Heart left ventricle (tissue), 16 donors: ENCODE measurements at regions of chr5 and their contacts with region 1.

Region 1: GRCh38 chr5:95961617-95962474 is at the start of gene ELL2:
- DNase-seq: peak; percentile 97 to 99 (median 98)
- ATAC-seq: peak; percentile 89 to 95 (median 94)
- H3K4me3 ChIP-seq: peak within 1 kb of the TSS; percentile 70 to 97 (median 90)
- H3K27ac ChIP-seq: peak within 1 kb of the TSS; percentile 94 to 100 (median 98)
- H3K4me1 ChIP-seq: peaks cover 0 to 49% (median 23%) of the 10 kb centered on the region in 12 donors
- H3K27me3 ChIP-seq: no peaks in the 10 kb centered on the region
- CTCF ChIP-seq: no peak
- POLR2A ChIP-seq: peak; percentile 48 to 97
- total RNA-seq, gene ELL2: 15.4 to 74.5 (median 31.1) TPM

Region 2: DNA sequence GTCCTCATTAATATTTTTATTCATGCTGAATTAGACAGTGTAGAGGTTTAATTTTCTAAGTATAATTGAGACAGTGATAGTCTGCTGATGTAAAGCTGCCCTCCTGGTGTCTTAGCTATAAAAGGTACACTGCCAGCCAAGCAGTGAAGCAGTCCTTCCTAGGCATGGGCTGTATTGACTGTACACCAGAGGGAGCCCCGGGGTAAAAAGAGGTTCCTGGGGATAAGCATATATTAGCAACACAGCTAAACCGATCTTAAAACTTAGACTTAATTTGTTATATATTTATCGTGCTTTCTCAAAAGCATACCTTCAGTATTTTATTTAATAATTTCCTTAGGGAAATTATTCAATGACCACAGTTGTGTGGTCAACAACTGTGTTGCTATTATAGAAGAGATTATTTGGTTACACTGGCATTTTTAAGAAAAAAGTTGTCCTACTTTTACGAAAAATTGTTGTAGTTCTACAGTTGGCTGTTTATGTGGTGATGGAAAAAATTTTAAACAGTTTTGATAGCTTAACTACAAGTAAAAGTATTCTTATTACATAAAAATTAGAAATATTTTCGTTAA is 69.0 kb before region 1 on chr5:
- intact Hi-C with region 1: loop called in 2 of 10 experiments (anchors 5 kb)
- DNase-seq: no peak
- ATAC-seq: peak in 2 of 4 donors; percentile 42 to 59
- H3K4me3 ChIP-seq: no peak overlapping the region
- H3K27ac ChIP-seq: no peak overlapping the region
- H3K4me1 ChIP-seq: peaks cover 0 to 22% (median 3%) of the 10 kb centered on the region in 12 donors
- H3K27me3 ChIP-seq: no peaks in the 10 kb centered on the region
- CTCF ChIP-seq: peak in 11 of 12 donors; percentile 18 to 52 (median 35)
- POLR2A ChIP-seq: no peak

Region 3: GRCh38 chr5:96235008-96235910 is 273.4 kb after region 1 on chr5:
- intact Hi-C with region 1: loop called in 2 of 10 experiments (anchors 10 kb)
- DNase-seq: peak in 1 of 5 donors; percentile 23
- ATAC-seq: peak; percentile 93 to 98 (median 96)
- H3K4me3 ChIP-seq: peak overlapping the region in 1 of 12 donors; percentile 8
- H3K27ac ChIP-seq: peak overlapping the region; percentile 70 to 95 (median 80)
- H3K4me1 ChIP-seq: peaks cover 0 to 21% (median 13%) of the 10 kb centered on the region in 12 donors
- H3K27me3 ChIP-seq: no peaks in the 10 kb centered on the region
- CTCF ChIP-seq: no peak
- POLR2A ChIP-seq: peak in 1 of 2 donors; percentile 19

Region 4: DNA sequence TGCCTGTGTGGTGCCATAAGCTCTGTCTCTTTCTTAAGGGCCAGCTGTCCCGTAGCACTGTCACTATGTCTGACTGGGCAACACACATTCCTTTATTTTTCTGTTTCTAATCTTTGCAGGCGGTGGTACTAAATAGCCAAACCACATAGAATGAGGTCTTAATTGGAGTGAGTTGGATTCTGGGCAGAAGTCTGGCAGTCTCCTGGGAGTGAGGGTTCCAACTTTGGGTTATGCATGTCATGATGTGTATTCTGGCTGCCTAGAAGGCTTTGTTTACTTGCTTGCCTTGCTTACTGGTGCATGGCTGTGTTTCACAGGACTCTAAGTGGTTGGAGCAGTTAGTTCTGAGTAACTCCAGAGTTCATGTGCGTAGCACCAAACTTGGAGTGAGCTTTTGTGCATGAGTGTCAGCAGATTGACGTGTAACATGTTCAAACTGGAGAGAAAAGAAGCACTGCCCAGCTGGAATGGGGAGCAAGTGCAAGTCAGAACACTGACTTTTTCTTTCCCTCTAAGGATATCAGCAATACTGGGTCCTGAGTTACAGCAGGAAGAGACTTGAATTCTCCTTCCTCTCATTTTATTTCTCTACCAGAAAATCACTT is 285.4 kb after region 1 on chr5:
- intact Hi-C with region 1: loop called in 2 of 10 experiments (anchors 1 to 10 kb)
- DNase-seq: peak in 4 of 5 donors; percentile 10 to 52 (median 44)
- ATAC-seq: peak; percentile 88 to 96 (median 95)
- H3K4me3 ChIP-seq: peak overlapping the region in 1 of 12 donors; percentile 1
- H3K27ac ChIP-seq: peak overlapping the region; percentile 51 to 81 (median 74)
- H3K4me1 ChIP-seq: peaks cover 0 to 44% (median 15%) of the 10 kb centered on the region in 12 donors
- H3K27me3 ChIP-seq: no peaks in the 10 kb centered on the region
- CTCF ChIP-seq: no peak
- POLR2A ChIP-seq: no peak

Region 5: GRCh38 chr5:96331210-96331609 is 369.4 kb after region 1 on chr5:
- intact Hi-C with region 1: loop called (anchors 1 to 10 kb)
- DNase-seq: no peak
- ATAC-seq: no peak
- H3K4me3 ChIP-seq: no peak overlapping the region
- H3K27ac ChIP-seq: no peak overlapping the region
- H3K4me1 ChIP-seq: peaks cover 0 to 25% (median 0%) of the 10 kb centered on the region in 12 donors
- H3K27me3 ChIP-seq: no peaks in the 10 kb centered on the region
- CTCF ChIP-seq: no peak
- POLR2A ChIP-seq: no peak